Naive thymus-derived CD8-positive, alpha-beta T cell (primary cell): ENCODE measurements at regions of chr5 and their contacts with region 1.

Region 1: GRCh38 chr5:172133359-172134029 is 54.5 kb downstream of the STK10 start:
- DNase-seq: peak in 2 of 10 donors; percentile 23 to 29
- ATAC-seq: peak; percentile 56 to 63
- H3K4me3 Mint-ChIP-seq: peak overlapping the region; percentile 16 to 79 (median 69)
- H3K27ac Mint-ChIP-seq: peak overlapping the region; percentile 79 to 95 (median 88)
- H3K4me1 Mint-ChIP-seq: peaks cover 33 to 83% (median 76%) of the 10 kb centered on the region in 4 donors
- H3K27me3 Mint-ChIP-seq: no peaks in the 10 kb centered on the region

Region 2: GRCh38 chr5:172114875-172115422 is 18.5 kb before region 1 on chr5:
- POLR2A ChIA-PET with region 1: interaction called, 17 read pairs
- DNase-seq: peak; percentile 30 to 87 (median 66)
- ATAC-seq: peak; percentile 51 to 64
- H3K4me3 Mint-ChIP-seq: peak overlapping the region; percentile 69 to 93 (median 81)
- H3K27ac Mint-ChIP-seq: peak overlapping the region; percentile 93 to 99 (median 98)
- H3K4me1 Mint-ChIP-seq: peaks cover 39 to 88% (median 79%) of the 10 kb centered on the region in 4 donors
- H3K27me3 Mint-ChIP-seq: no peaks in the 10 kb centered on the region

Region 3: DNA sequence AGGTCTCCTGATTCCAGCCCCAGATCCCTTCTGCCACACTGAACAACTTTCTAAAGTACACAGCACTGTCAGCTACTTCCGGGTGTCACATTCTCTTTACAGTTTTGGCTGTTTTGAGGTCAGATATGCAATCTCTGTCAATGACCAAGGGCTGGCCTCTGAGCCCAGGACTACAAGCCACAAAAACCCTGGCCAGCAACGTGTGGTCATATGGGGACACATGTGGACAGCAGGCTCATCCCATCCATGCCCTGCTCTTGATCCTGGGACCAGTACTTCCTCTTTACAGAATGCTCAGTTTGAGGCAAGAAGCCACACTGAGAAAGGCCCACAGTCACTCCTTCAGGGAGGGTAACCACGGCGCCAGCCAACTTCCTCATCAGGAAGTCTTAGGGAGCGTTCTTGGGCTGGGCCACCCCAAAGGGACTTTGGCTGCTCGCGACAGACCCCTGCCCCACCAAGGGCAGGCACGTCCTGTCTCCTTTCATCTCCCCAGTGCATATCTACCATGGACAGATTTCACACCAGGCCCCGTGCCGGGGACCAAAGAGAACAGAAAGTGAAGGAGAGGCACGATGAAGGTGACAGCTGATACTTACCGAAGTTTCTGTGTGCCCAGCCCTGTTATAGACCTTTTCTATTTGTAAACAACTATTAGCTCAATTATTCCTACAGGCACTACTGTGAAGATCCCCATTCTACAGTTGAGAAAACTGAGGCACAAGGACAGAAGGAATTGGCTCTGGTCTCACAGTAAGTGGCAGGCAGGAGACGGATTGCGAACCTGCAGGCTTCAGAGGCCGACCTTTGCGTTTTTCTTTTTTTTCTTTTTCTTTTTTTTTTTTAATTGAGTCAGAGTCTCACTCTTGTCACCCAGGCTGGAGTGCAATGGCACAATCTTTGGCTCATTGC is 17.3 kb after region 1 on chr5:
- POLR2A ChIA-PET with region 1: no interaction called
- DNase-seq: peak in 5 of 10 donors; percentile 13 to 37 (median 26)
- ATAC-seq: peak; percentile 74 to 76
- H3K4me3 Mint-ChIP-seq: peak overlapping the region; percentile 44 to 76 (median 67)
- H3K27ac Mint-ChIP-seq: peak overlapping the region; percentile 86 to 98 (median 94)
- H3K4me1 Mint-ChIP-seq: peaks cover 39 to 90% (median 84%) of the 10 kb centered on the region in 4 donors
- H3K27me3 Mint-ChIP-seq: no peaks in the 10 kb centered on the region

Region 4: GRCh38 chr5:172173831-172174153 is 40.3 kb after region 1 on chr5:
- POLR2A ChIA-PET with region 1: interaction called, 13 read pairs
- DNase-seq: peak; percentile 22 to 72 (median 50)
- ATAC-seq: peak; percentile 2 to 3
- H3K4me3 Mint-ChIP-seq: peak overlapping the region; percentile 86 to 100 (median 93)
- H3K27ac Mint-ChIP-seq: peak overlapping the region; percentile 96 to 100 (median 99)
- H3K4me1 Mint-ChIP-seq: peaks cover 58 to 99% (median 95%) of the 10 kb centered on the region in 4 donors
- H3K27me3 Mint-ChIP-seq: no peaks in the 10 kb centered on the region